Breast epithelium (tissue), 4 donors: ENCODE measurements at regions of chr16 and their contacts with region 1.

Region 1: DNA sequence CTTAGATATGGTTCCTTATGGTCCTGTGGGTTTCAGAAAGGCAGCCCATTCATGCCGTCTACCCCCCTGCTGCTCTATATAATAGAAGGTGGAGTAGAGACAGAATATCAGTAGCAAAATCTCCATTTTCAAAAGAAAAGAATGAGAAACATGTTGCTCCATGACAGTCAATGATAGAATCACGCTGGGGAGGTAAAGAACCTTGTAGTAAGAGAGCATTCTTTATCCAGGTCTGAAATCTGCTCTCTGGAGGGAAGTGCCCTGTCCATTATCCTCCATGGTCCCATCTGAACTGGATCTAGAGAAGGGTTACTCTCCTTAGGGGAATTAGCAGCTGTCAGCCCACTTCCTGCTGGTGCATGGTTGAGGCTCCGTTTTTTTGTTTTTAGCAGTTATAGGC is 272.8 kb downstream of the WWOX start:
- DNase-seq: no peak
- H3K4me3 ChIP-seq: no peak overlapping the region
- H3K27ac ChIP-seq: no peak overlapping the region
- H3K4me1 ChIP-seq: no peaks in the 10 kb centered on the region
- H3K27me3 ChIP-seq: no peaks in the 10 kb centered on the region
- CTCF ChIP-seq: no peak
- POLR2A ChIP-seq: no peak

Region 2: GRCh38 chr16:78034525-78034924 is 337.8 kb before region 1 on chr16:
- intact Hi-C with region 1: loop called (anchors 5 kb)
- DNase-seq: no peak
- H3K4me3 ChIP-seq: no peak overlapping the region
- H3K27ac ChIP-seq: no peak overlapping the region
- H3K4me1 ChIP-seq: no peaks in the 10 kb centered on the region
- H3K27me3 ChIP-seq: no peaks in the 10 kb centered on the region
- CTCF ChIP-seq: no peak
- POLR2A ChIP-seq: no peak